ENCODE measurements at regions of chr16 and their contacts with region 1.

Region 1: DNA sequence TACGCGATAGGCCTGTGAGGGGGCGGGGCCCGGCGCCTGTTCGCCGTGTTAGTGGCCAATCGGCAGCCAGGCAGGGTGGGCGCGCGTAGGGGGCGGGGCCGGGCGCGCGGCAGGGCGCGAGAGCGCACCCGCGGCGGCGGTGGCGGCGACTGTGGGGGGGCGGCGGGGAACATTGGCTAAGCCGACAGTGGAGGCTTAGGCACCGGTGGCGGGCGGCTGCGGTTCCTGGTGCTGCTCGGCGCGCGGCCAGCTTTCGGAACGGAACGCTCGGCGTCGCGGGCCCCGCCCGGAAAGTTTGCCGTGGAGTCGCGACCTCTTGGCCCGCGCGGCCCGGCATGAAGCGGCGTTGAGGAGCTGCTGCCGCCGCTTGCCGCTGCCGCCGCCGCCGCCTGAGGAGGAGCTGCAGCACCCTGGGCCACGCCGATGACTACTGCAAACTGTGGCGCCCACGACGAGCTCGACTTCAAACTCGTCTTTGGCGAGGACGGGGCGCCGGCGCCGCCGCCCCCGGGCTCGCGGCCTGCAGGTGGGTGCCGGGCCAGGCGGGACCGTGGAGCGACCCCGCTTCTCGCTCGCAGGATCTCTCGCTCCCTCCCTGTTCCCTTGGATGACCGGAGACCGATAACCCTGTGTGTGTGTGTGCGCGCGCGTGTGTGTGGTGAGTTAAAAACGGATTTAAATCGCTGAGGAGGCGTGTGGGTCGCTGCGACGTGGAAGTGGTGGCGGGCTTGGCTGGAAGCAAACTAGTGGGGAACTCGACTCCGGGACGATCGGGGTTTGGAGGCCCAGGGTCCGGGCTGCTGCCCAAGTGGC is at the start of gene NFATC3:
- DNase-seq: peak; percentile 98 to 99 (median 98)
- H3K4me3 ChIP-seq: peak within 1 kb of the TSS; percentile 79 to 92
- H3K4me3 Mint-ChIP-seq: peak within 1 kb of the TSS; percentile 90 to 99 (median 94)
- H3K27ac ChIP-seq: peak within 1 kb of the TSS; percentile 89
- H3K27ac Mint-ChIP-seq: peak within 1 kb of the TSS; percentile 86 to 97 (median 92)
- H3K4me1 ChIP-seq: peaks cover 78% of the 10 kb centered on the region
- H3K4me1 Mint-ChIP-seq: peaks cover 53 to 80% (median 63%) of the 10 kb centered on the region in 4 donors
- H3K27me3 ChIP-seq: no peaks in the 10 kb centered on the region
- H3K27me3 Mint-ChIP-seq: no peaks in the 10 kb centered on the region
- total RNA-seq, gene NFATC3: 127 to 134 TPM

Region 2: DNA sequence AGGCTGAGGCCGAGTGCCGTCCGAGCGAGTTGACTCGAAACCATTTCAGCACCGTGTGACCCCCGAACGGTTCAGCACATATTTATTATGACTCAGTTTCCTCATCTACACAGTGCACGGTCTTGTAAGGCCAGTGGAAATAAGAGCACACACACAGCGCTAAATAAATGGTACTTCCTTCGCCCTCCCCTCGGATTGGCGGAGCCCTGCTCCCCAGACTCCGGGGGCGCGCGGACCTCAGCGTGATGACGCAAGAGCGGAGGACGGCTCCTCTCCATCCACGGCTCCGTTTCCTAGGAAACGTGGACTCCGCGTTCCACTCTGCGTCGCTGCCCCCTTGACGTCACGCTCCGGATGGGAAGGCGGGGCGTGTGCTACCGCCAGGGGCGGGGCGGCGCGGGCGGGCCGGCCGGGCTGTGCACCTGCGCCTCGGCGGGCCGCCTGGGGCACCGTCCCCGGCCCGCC is 424.9 kb before region 1 on chr16 and contains the start of gene PARD6A:
- CTCF ChIA-PET with region 1: no interaction called
- POLR2A ChIA-PET with region 1: no interaction called
- intact Hi-C with region 1: loop called (anchors 1 kb)
- DNase-seq: peak; percentile 94 to 97 (median 96)
- H3K4me3 ChIP-seq: peak within 1 kb of the TSS; percentile 98 to 100
- H3K4me3 Mint-ChIP-seq: peak within 1 kb of the TSS; percentile 93 to 98 (median 95)
- H3K27ac ChIP-seq: peak within 1 kb of the TSS; percentile 98
- H3K27ac Mint-ChIP-seq: peak within 1 kb of the TSS; percentile 97 to 99 (median 98)
- H3K4me1 ChIP-seq: peaks cover 27% of the 10 kb centered on the region
- H3K4me1 Mint-ChIP-seq: peaks cover 10 to 48% (median 20%) of the 10 kb centered on the region in 4 donors
- H3K27me3 ChIP-seq: no peaks in the 10 kb centered on the region
- H3K27me3 Mint-ChIP-seq: no peaks in the 10 kb centered on the region
- total RNA-seq, gene PARD6A: 7.4 to 8.8 TPM

Region 3: DNA sequence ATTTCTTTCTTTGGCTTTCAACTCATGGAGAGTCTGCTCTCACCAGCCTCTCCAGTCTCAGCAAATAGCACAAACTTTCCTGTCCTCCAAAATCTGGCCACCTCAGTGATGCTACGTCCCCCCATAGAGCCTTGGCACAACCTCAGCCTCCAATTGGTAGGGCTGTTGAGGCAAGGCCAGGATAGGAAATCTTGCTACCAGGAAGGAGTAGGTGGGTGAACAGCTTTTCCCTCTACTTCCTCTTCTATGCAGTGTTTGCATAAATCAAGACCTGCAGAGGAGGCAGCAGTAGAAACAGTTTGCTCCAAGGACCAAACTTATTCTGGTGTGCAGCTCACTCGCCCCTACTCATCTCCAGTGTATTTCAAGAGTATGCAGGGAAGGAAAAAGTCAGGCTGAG is 85.5 kb before region 1 on chr16:
- CTCF ChIA-PET with region 1: interaction called, 6 read pairs
- POLR2A ChIA-PET with region 1: interaction called, 30 read pairs
- intact Hi-C with region 1: no loop called
- DNase-seq: no peak
- H3K4me3 ChIP-seq: peak overlapping the region in 1 of 2 donors; percentile 41
- H3K4me3 Mint-ChIP-seq: peak overlapping the region; percentile 84 to 96 (median 88)
- H3K27ac ChIP-seq: peak overlapping the region; percentile 60
- H3K27ac Mint-ChIP-seq: peak overlapping the region; percentile 84 to 99 (median 95)
- H3K4me1 ChIP-seq: peaks cover 80% of the 10 kb centered on the region
- H3K4me1 Mint-ChIP-seq: peaks cover 36 to 78% (median 54%) of the 10 kb centered on the region in 4 donors
- H3K27me3 ChIP-seq: no peaks in the 10 kb centered on the region
- H3K27me3 Mint-ChIP-seq: no peaks in the 10 kb centered on the region

Region 4: DNA sequence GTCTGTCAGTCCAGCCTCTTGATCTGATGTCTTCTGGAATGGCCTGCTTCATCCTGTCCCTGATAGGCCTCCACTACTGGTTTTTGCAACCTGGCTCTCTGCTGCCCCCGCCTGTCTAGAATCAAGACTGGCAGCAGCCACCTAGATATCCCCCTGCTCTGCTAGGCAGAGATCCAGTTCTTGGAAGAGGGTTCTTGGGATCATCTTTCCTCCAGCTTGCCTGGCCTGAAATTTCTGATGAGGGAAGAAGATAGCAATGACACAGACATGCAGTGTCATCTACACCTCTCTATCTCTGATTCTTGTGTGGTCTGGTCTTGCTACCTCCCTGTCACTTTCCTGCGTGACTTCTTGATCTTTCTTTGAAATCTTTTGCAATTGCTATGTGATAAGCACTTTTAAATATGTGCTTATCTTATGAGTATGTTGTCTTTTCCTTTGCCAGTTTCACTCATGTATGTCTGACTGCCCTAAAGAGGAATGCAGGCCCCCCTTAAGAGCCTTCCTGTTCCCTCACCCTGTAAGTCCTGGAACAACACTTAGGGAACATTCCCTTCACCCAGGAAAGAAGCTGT is 20.6 kb before region 1 on chr16:
- CTCF ChIA-PET with region 1: interaction called, 83 read pairs
- POLR2A ChIA-PET with region 1: interaction called, 474 read pairs
- intact Hi-C with region 1: loop called (anchors 2 kb)
- DNase-seq: peak; percentile 60 to 78 (median 68)
- H3K4me3 ChIP-seq: no peak overlapping the region
- H3K4me3 Mint-ChIP-seq: peak overlapping the region in 6 of 8 donors; percentile 1 to 74 (median 34)
- H3K27ac ChIP-seq: peak overlapping the region; percentile 42
- H3K27ac Mint-ChIP-seq: peak overlapping the region; percentile 79 to 96 (median 84)
- H3K4me1 ChIP-seq: peaks cover 79% of the 10 kb centered on the region
- H3K4me1 Mint-ChIP-seq: peaks cover 51 to 90% (median 71%) of the 10 kb centered on the region in 4 donors
- H3K27me3 ChIP-seq: no peaks in the 10 kb centered on the region
- H3K27me3 Mint-ChIP-seq: no peaks in the 10 kb centered on the region

Region 5: DNA sequence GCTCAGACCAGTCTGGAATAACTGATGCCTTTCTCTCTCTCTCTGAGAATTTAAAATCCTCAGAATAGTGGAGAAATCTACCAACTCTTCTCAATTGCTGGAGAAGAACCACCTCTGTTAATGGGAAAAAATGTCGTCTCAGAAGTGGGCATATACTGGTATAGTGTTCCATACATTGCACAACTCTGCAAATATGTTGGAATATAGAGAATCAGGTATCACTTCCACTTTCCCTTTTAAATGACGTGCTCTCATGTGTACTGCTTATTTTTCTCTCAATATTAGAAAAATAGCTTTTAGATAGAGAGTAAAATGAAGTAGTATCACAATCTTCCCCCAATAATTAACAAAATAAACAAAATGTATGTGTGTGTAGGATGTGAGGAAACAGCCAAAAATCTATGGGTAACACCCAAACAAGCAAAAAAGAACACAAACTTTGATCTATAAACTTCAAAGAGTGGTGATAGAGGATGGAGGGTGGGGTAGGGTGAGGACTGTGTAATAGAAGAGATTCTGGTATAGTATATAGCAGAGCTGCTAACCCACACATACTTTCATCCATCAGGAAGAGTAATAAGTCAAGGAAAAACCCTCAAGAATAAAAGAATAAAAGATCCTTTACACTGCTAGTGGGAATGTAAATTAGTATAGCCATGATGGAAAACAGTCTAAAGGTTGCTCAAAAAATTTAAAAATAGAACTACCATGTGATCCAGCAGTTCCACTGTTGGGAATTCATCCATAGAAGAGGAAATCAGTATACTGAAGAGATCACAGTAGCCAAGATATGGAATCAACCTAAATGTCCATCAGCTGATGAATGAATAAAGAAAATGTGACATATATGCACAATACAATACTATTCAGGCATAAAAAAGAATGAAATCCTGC is 46.6 kb after region 1 on chr16:
- CTCF ChIA-PET with region 1: interaction called, 6 read pairs
- POLR2A ChIA-PET with region 1: interaction called, 11 read pairs
- intact Hi-C with region 1: loop called (anchors 5 kb)
- DNase-seq: peak; percentile 46 to 60 (median 50)
- H3K4me3 ChIP-seq: no peak overlapping the region
- H3K4me3 Mint-ChIP-seq: peak overlapping the region; percentile 47 to 72 (median 66)
- H3K27ac ChIP-seq: peak overlapping the region; percentile 37
- H3K27ac Mint-ChIP-seq: peak overlapping the region; percentile 80 to 94 (median 82)
- H3K4me1 ChIP-seq: peaks cover 49% of the 10 kb centered on the region
- H3K4me1 Mint-ChIP-seq: peaks cover 41 to 70% (median 54%) of the 10 kb centered on the region in 4 donors
- H3K27me3 ChIP-seq: no peaks in the 10 kb centered on the region
- H3K27me3 Mint-ChIP-seq: no peaks in the 10 kb centered on the region